ENCODE measurements at regions of chr14 and their contacts with region 1.

Region 1: GRCh38 chr14:66624299-66624937 is 116.5 kb downstream of the GPHN start:
- DNase-seq: peak in 1 of 2 donors; percentile 32
- ATAC-seq: peak; percentile 54 to 88
- H3K4me3 ChIP-seq: no peak overlapping the region
- H3K27ac ChIP-seq: no peak overlapping the region
- H3K4me1 ChIP-seq: peaks cover 10 to 23% of the 10 kb centered on the region in 2 donors
- H3K27me3 ChIP-seq: no peaks in the 10 kb centered on the region
- CTCF ChIP-seq: peak; percentile 36 to 71 (median 51)
- POLR2A ChIP-seq: no peak

Region 2: DNA sequence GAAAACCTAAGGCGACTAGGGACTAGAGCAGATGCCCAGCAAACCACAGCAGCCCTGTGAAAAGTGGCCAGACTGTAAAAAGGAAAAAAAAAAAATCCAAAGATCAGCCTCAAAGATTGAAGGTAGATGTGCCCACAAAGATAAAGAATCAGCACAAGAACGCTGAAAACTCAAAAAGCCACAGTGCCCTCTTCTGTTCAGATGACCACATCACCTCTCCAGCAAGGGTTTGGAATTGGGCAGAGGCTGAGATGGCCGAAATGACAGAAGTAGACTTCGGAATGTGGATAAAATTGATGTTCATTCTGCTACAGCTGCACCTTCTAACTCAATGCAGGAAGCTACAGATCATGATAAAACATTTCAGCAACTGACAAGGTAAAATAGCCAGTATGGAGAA is 38.0 kb after region 1 on chr14:
- in situ Hi-C with region 1: no loop called
- intact Hi-C with region 1: loop called (anchors 2 kb)
- DNase-seq: no peak
- ATAC-seq: no peak
- H3K4me3 ChIP-seq: no peak overlapping the region
- H3K27ac ChIP-seq: no peak overlapping the region
- H3K4me1 ChIP-seq: no peaks in the 10 kb centered on the region
- H3K27me3 ChIP-seq: no peaks in the 10 kb centered on the region
- CTCF ChIP-seq: peak in 3 of 5 experiments; percentile 13 to 34 (median 17)
- POLR2A ChIP-seq: no peak

Region 3: GRCh38 chr14:66746316-66747006 is 122.0 kb after region 1 on chr14:
- in situ Hi-C with region 1: no loop called
- intact Hi-C with region 1: loop called (anchors 2 kb)
- DNase-seq: no peak
- ATAC-seq: peak in 1 of 2 donors; percentile 53
- H3K4me3 ChIP-seq: no peak overlapping the region
- H3K27ac ChIP-seq: no peak overlapping the region
- H3K4me1 ChIP-seq: peaks cover 19 to 21% of the 10 kb centered on the region in 2 donors
- H3K27me3 ChIP-seq: no peaks in the 10 kb centered on the region
- CTCF ChIP-seq: peak; percentile 33 to 62 (median 41)
- POLR2A ChIP-seq: no peak

Region 4: GRCh38 chr14:66790101-66790500 is 165.7 kb after region 1 on chr14:
- in situ Hi-C with region 1: no loop called
- intact Hi-C with region 1: no loop called
- DNase-seq: no peak
- ATAC-seq: no peak
- H3K4me3 ChIP-seq: no peak overlapping the region
- H3K27ac ChIP-seq: no peak overlapping the region
- H3K4me1 ChIP-seq: no peaks in the 10 kb centered on the region
- H3K27me3 ChIP-seq: no peaks in the 10 kb centered on the region
- CTCF ChIP-seq: no peak
- POLR2A ChIP-seq: no peak

Measured in gastrocnemius medialis (tissue), 4 donors.